WTC11 (cell line): ENCODE measurements at regions of chr11 and their contacts with region 1.

Region 1: GRCh38 chr11:128956401-128957201 is 13.9 kb upstream of the TP53AIP1 start:
- DNase-seq: no peak
- ATAC-seq: peak; percentile 88
- H3K4me3 Mint-ChIP-seq: no peak overlapping the region
- H3K27ac Mint-ChIP-seq: no peak overlapping the region
- H3K4me1 Mint-ChIP-seq: no peaks in the 10 kb centered on the region
- H3K27me3 Mint-ChIP-seq: peaks cover 12% of the 10 kb centered on the region
- CTCF ChIP-seq: peak; percentile 41

Region 2: DNA sequence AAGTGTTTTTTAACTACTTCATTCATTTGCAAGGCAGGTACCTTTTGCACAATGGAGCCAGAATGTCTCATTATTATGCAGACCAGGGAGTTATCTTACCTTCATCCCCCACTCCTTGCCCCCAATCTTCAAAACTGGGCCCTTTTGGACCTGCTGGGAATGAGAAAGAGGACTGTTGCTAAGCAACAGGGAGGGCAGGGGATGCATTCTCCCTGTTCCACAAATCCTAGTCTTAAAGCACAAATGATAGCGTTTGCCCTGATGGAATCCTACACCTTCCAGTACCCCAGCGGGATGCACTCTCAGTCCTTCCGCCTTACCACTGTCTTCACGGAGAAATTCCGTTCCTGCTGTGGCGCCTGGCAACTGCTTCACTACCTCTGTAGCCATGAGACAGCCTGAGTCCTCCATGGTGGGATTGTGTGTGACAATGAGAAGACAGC is 85.4 kb before region 1 on chr11:
- CTCF ChIA-PET with region 1: interaction called, 10 read pairs
- POLR2A ChIA-PET with region 1: no interaction called
- DNase-seq: no peak
- ATAC-seq: peak; percentile 71
- H3K4me3 Mint-ChIP-seq: peak overlapping the region; percentile 37
- H3K27ac Mint-ChIP-seq: peak overlapping the region; percentile 39
- H3K4me1 Mint-ChIP-seq: peaks cover 43% of the 10 kb centered on the region
- H3K27me3 Mint-ChIP-seq: peaks cover 41% of the 10 kb centered on the region
- CTCF ChIP-seq: no peak

Region 3: GRCh38 chr11:128890543-128891368 is 65.8 kb before region 1 on chr11 and contains the start of gene KCNJ5:
- CTCF ChIA-PET with region 1: interaction called, 180 read pairs
- POLR2A ChIA-PET with region 1: interaction called, 3 read pairs
- DNase-seq: peak; percentile 56
- ATAC-seq: peak; percentile 41
- H3K4me3 Mint-ChIP-seq: peak within 1 kb of the TSS; percentile 77
- H3K27ac Mint-ChIP-seq: no peak within 1 kb of the TSS
- H3K4me1 Mint-ChIP-seq: peaks cover 42% of the 10 kb centered on the region
- H3K27me3 Mint-ChIP-seq: peaks cover 95% of the 10 kb centered on the region
- CTCF ChIP-seq: no peak
- total RNA-seq, gene KCNJ5: 0.09 to 0.23 TPM (median 0.22 TPM) in 3 replicates

Region 4: DNA sequence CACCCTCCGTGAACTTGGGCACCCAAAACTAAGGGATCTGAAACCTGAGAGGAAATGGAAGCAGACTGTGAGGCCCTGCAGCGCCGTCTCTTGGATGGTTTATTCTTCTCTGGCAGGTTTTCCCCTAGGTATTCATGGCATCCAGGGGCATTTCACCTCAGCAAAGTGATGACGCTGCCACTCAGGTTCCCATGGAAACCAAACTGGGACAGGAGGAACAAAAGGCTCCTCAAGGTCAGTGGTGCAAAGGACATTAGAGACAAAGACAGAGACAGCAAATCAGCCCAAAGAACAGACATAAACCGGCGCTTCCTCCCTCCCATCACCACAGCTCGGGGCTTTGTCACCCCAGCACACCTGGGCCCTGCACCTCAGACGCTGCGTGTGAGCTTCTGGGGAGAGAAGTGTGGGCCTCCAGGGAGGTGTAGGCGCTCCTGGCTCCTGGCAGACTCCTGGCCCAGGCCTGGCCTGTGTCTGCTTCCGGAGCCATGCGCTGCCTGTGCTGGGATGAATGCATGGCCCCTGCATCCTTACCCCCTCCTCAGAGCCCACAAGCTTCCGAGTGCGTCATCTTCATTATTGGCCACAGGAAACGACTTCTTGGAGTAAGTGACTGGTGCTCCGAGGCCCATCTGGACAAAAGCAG is 19.9 kb before region 1 on chr11:
- CTCF ChIA-PET with region 1: interaction called, 21 read pairs
- POLR2A ChIA-PET with region 1: no interaction called
- DNase-seq: peak; percentile 70
- ATAC-seq: peak; percentile 71
- H3K4me3 Mint-ChIP-seq: no peak overlapping the region
- H3K27ac Mint-ChIP-seq: 0 out of 2 replicates have a peak overlapping the region, but pooled peaks have one; percentile 41
- H3K4me1 Mint-ChIP-seq: peaks cover 22% of the 10 kb centered on the region
- H3K27me3 Mint-ChIP-seq: peaks cover 76% of the 10 kb centered on the region
- CTCF ChIP-seq: no peak

Region 5: DNA sequence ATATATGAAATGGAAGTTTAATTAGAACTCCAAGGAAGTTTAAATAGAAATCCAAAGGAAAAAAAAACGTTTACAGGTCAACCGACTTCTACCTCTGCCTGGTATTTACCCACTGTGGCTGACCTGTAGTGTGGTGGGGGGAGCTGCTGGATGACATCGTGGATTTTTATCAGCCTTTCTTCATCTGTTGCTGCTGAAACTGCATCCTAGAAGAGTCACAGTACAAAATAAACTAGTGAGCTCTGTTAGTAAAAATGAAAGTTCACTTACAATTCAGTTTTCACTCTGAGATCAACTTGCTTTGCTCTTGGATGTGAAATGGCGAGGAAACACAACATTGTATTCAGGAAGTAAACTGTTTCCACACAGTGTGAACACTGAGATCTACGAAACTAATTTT is 29.3 kb after region 1 on chr11:
- CTCF ChIA-PET with region 1: no interaction called
- POLR2A ChIA-PET with region 1: no interaction called
- DNase-seq: no peak
- ATAC-seq: no peak
- H3K4me3 Mint-ChIP-seq: no peak overlapping the region
- H3K27ac Mint-ChIP-seq: peak overlapping the region; percentile 51; the same call in 1 of the 2 replicates
- H3K4me1 Mint-ChIP-seq: peaks cover 8% of the 10 kb centered on the region
- H3K27me3 Mint-ChIP-seq: no peaks in the 10 kb centered on the region
- CTCF ChIP-seq: no peak